Motor neuron (in vitro differentiated cells): ENCODE measurements at regions of chr14 and their contacts with region 1.

Region 1: GRCh38 chr14:96304956-96305355 is 48.9 kb downstream of the BDKRB1 start:
- ATAC-seq: no peak
- H3K4me3 ChIP-seq: no peak overlapping the region
- H3K27ac ChIP-seq: no peak overlapping the region
- H3K4me1 ChIP-seq: no peaks in the 10 kb centered on the region

Region 2: DNA sequence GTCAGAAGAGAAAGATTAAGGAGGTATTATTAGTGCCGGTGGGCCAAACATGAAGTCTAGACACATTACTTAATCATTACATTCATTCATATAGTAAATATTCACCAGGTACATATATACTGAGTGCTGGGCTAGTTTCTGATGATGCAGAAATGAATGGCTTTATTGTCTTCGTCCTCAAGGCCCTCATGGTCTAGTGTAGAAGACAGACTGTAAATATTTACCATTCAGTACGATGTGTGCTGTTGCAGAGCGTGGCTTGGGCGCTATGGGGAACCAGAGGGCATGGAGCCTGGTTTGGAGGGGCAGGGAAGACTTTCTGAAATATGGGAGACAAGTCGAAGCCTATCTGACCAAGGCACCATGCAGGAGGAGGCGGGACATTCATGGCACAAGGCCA is 655.7 kb before region 1 on chr14:
- in situ Hi-C with region 1: no loop called
- ATAC-seq: no peak
- H3K4me3 ChIP-seq: no peak overlapping the region
- H3K27ac ChIP-seq: no peak overlapping the region
- H3K4me1 ChIP-seq: no peaks in the 10 kb centered on the region

Region 3: DNA sequence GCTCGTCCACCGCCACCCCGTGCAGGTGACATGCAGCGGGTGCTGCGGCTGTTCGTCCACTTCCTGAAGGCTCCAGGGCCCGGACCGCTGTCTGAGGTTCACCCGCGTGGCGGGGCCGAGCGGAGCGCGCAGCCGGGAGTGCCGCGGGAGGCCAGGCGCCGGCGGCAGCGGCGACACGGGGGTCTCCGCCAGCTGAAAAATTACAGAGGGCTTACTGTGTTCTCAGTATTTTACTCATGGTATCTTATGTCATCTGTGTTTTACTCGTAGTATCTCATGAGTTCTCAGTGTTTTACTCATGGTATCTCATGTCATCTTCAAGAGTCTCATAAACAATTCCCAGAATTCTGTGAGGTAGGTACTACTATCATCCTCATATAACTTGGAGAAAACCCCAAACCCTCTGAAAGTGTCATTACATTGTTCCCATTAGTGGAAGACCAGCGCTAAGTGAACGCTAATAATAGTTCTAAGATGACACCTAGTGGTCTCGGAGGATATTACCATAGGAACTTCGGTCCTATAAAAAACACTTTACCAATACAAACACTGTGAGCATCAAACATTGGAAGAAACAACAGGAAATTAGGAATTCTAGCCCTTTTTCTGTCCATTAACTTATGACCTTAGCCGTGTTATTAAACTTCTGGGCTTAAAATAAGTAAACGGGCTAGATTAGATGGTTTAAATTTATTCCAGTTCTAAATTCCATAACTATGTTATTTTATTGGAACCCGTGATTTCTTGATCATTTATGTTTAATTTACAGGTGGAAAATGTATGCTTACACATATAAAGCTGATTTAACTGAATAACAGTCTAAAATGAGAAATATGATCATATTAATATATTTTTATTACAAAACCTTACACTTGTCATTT is 119.4 kb after region 1 on chr14:
- in situ Hi-C with region 1: loop called in 2 of 9 experiments (anchors 25 kb)
- ATAC-seq: peak; percentile 68 to 92 (median 78)
- H3K4me3 ChIP-seq: no peak overlapping the region
- H3K27ac ChIP-seq: no peak overlapping the region
- H3K4me1 ChIP-seq: peaks cover 10 to 11% of the 10 kb centered on the region in 2 donors